Activated CD4-positive, alpha-beta memory T cell treated with anti-CD3 and anti-CD28 coated beads for 36 hours (primary cell): ENCODE measurements at regions of chr17 and their contacts with region 1.

Region 1: GRCh38 chr17:40417609-40418427 is at the start of gene TOP2A:
- DNase-seq: peak; percentile 98
- H3K4me3 Mint-ChIP-seq: peak within 1 kb of the TSS; percentile 99
- H3K27ac Mint-ChIP-seq: peak within 1 kb of the TSS; percentile 89
- H3K4me1 Mint-ChIP-seq: peaks cover 30% of the 10 kb centered on the region
- H3K27me3 Mint-ChIP-seq: no peaks in the 10 kb centered on the region
- total RNA-seq, gene TOP2A: 301 to 311 TPM

Region 2: DNA sequence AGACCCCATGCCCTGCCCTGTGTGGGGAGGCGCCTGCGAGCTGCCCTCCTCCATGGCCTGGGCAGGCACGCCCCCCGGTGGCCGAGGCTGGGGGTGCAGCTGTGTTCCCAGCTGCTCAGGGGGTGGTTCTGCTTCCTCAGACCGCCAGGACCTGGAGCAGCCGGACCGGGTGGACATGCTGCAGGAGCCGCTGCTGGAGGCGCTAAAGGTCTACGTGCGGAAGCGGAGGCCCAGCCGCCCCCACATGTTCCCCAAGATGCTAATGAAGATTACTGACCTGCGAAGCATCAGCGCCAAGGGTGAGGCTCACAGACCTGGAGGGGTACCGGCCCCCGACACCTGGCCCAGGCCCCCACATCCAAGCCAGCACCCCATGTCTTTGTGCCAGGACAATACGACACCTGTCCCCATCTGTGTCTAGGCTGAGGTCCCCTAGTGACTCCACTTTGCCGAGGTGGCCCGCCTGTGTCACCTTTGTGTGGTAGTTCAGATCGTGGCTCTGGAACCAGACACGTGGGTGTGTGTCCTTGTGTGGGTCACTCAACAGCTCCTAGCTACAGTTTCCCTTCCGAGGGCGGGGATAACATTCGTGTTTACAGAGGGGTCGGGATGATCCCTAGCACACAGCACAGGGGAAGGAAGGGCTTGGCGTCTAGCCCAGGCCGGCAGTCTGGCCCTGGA is 62.6 kb before region 1 on chr17:
- CTCF ChIA-PET with region 1: interaction called, 10 read pairs
- POLR2A ChIA-PET with region 1: no interaction called
- intact Hi-C with region 1: loop called (anchors 2 kb)
- DNase-seq: peak; percentile 83
- H3K4me3 Mint-ChIP-seq: no peak overlapping the region
- H3K27ac Mint-ChIP-seq: no peak overlapping the region
- H3K4me1 Mint-ChIP-seq: peaks cover 17% of the 10 kb centered on the region
- H3K27me3 Mint-ChIP-seq: no peaks in the 10 kb centered on the region

Region 3: DNA sequence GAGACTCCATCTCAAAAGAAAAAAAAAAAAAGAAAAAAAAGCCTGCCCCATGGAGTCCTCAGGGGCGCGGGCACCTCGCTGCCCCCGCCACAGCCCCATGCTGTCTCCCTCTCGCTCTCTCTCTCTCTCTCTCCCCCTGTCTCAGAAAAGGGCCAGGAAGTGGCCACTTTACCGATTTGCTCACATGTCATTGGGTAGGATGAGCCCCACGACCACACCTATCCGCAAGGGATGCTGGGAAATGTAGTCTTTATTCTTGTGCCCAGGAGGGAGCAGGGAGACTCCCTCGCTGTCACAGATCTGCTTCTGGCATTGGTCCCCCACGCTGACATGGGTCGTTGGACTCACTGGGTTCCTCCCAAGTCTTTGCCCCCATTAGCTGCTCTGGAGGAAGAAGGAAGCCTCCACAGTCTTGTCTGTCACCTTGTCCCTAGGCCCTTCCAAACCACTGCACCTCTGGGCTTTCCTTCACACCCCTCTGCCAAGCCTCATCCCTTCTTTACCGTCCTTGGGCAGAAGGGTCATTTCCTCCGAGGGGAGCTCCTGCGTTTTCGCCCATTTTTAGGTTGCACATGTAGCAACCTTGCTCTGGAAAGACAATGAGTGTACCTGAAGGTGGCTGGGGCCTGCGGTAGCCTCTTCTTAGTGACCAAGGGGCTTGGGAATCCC is 46.4 kb before region 1 on chr17:
- CTCF ChIA-PET with region 1: no interaction called
- POLR2A ChIA-PET with region 1: interaction called, 4 read pairs
- intact Hi-C with region 1: loop called (anchors 5 kb)
- DNase-seq: peak; percentile 57
- H3K4me3 Mint-ChIP-seq: no peak overlapping the region
- H3K27ac Mint-ChIP-seq: no peak overlapping the region
- H3K4me1 Mint-ChIP-seq: peaks cover 31% of the 10 kb centered on the region
- H3K27me3 Mint-ChIP-seq: no peaks in the 10 kb centered on the region

Region 4: DNA sequence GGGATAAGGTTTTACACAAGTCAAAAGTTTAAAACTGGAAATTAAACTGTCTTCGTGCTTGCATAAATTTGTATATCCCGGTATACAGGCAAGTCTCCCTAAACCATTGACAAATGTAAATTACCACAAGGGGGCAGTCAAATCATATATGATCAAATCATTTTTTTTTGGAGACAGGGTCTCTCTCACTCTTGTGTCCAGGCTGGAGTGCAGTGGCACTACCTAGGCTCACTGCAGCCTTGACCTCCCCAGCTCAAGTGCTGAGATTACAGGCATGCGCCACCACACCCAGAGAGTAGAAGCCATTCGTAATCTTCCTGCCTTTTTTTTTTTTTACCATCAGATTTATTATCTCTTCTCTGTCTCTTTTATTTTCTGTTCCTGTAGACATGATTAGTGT is 18.6 kb before region 1 on chr17:
- CTCF ChIA-PET with region 1: interaction called, 41 read pairs
- POLR2A ChIA-PET with region 1: no interaction called
- intact Hi-C with region 1: no loop called
- DNase-seq: no peak
- H3K4me3 Mint-ChIP-seq: no peak overlapping the region
- H3K27ac Mint-ChIP-seq: peak overlapping the region; percentile 54
- H3K4me1 Mint-ChIP-seq: peaks cover 18% of the 10 kb centered on the region
- H3K27me3 Mint-ChIP-seq: no peaks in the 10 kb centered on the region

Region 5: DNA sequence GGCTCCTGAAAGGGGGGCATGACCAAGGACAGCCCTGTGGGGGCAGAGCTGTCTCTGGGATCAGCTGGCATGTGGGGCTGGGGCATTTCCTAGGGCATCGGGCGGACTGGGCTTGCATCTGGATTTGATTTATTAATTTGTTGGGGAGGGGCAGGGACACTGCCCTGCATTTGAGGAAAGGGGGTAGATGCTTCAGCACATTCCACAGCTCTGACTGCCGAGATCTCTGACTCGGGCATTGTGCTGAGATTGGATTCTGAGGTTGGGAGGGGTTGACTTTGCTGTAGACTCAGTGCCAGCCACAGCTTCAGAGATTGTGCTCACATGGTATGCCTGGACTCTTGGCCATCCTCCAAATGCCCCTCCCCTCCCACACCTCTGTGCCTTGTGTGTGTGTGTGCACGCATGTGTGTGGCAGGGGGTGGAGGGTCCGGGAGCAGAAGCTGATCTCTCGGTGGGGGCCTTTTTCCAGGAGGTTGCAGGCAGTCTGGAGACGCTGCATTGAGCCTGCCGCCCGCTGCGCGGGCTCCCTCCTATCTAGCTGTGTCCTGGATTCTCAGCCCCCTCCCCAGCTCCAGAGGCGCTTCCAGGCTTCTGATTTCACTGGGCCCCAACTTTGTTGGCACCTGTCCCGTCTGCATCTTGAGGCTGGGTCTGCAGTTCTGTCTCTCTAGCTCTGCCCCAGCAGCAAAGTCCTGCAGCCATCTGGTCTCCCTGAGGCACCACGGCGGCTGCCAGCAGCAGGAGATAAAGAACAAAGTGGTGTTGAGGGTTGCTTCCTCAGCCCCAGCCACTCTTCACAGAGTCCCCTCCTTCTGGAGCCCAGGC is 40.4 kb after region 1 on chr17:
- CTCF ChIA-PET with region 1: no interaction called
- POLR2A ChIA-PET with region 1: no interaction called
- intact Hi-C with region 1: no loop called
- DNase-seq: no peak
- H3K4me3 Mint-ChIP-seq: no peak overlapping the region
- H3K27ac Mint-ChIP-seq: no peak overlapping the region
- H3K4me1 Mint-ChIP-seq: no peaks in the 10 kb centered on the region
- H3K27me3 Mint-ChIP-seq: no peaks in the 10 kb centered on the region

Region 6: DNA sequence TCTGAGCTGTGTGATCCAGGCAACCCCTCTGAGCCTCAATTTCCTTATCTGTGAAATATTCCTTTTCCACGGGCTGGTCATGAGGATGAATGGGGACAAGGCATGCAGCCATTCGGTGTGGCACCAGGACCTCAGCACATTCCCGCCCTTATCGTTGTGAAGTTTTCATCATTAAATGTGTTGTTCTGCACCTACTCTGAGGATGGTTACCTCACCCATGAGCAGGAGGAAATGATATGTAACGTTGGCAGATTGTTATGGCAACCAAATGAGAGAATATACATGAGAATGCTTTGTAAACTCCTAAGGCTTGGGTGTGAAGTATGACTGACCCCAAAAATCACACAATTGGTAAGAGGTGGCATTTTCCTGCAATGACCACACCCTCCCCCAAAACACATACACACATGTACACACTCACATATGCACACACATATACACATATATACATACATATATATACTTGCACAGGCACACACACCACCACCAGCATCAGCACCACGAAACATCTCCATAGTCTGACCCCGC is 190.3 kb after region 1 on chr17:
- CTCF ChIA-PET with region 1: no interaction called
- POLR2A ChIA-PET with region 1: no interaction called
- intact Hi-C with region 1: loop called (anchors 1 kb)
- DNase-seq: peak; percentile 64
- H3K4me3 Mint-ChIP-seq: peak overlapping the region; percentile 5
- H3K27ac Mint-ChIP-seq: peak overlapping the region; percentile 78
- H3K4me1 Mint-ChIP-seq: peaks cover 95% of the 10 kb centered on the region
- H3K27me3 Mint-ChIP-seq: no peaks in the 10 kb centered on the region